ENCODE measurements at regions of chr7 and their contacts with region 1.

Region 1: GRCh38 chr7:138842111-138842510 is 44.1 kb upstream of the ATP6V0A4 start:
- DNase-seq: no peak
- H3K4me3 ChIP-seq: no peak overlapping the region
- H3K27ac ChIP-seq: no peak overlapping the region
- H3K4me1 ChIP-seq: peaks cover 10% of the 10 kb centered on the region
- H3K27me3 ChIP-seq: no peaks in the 10 kb centered on the region
- CTCF ChIP-seq: no peak
- POLR2A ChIP-seq: no peak

Region 2: GRCh38 chr7:138303943-138304495 is 538.1 kb before region 1 on chr7:
- CTCF ChIA-PET with region 1: no interaction called
- POLR2A ChIA-PET with region 1: no interaction called
- dilution Hi-C with region 1: no loop called
- intact Hi-C with region 1: no loop called
- DNase-seq: no peak
- H3K4me3 ChIP-seq: no peak overlapping the region
- H3K27ac ChIP-seq: no peak overlapping the region
- H3K4me1 ChIP-seq: no peaks in the 10 kb centered on the region
- H3K27me3 ChIP-seq: no peaks in the 10 kb centered on the region
- CTCF ChIP-seq: no peak
- POLR2A ChIP-seq: no peak

Region 3: DNA sequence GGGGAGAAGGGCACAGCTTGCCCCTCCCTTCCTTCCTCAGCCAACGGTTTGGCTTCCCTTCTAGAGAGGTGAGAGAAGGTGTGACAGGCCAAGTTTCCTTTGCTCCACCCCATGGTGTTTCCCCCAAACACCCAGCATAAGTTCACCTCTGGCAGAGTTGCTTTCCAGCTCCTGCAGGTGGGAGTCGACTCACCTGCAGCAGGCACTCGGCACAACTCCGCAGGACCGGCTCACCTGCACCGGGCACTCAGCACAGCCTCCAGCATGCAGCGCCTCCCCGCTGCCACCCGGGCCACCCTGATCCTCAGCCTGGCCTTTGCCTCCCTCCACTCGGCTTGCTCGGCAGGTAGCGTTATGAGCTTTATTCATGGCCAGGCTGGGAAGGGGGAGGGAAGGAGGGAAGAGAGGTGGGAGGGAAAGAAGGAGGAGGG is 44.3 kb before region 1 on chr7 and contains the starts of genes ATP6V0A4 and TMEM213:
- CTCF ChIA-PET with region 1: no interaction called
- POLR2A ChIA-PET with region 1: no interaction called
- dilution Hi-C with region 1: no loop called
- intact Hi-C with region 1: no loop called
- DNase-seq: no peak
- H3K4me3 ChIP-seq: no peak within 1 kb of the TSS
- H3K27ac ChIP-seq: no peak within 1 kb of the TSS
- H3K4me1 ChIP-seq: no peaks in the 10 kb centered on the region
- H3K27me3 ChIP-seq: no peaks in the 10 kb centered on the region
- CTCF ChIP-seq: no peak
- POLR2A ChIP-seq: no peak
- total RNA-seq, gene ATP6V0A4: 0.24 TPM in 1 of 2 replicates, not detected in the other
- total RNA-seq, gene TMEM213: not detected in 2 replicates

Region 4: DNA sequence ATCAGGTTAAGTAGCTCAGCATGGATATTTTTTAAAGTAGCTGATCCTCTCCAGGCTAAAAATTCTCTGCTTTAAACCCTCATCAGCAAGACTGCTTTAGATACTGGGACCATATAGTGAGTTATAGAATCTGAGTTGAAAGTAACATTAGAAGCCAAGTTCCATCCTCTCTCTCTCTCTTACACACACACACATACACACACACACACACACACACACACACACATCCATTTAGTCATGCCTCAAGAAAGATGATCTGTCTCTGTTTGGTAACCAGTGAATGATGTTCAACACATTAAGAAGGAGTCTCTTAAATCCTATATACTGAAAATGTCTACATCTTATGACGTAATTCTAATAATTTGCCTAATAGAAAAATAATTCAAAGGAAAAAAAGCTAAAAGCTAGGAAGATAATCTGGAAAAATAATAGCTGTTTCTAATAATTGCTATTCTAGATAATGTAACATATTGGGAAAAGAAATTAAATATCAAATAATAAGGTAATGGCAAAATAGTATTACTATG is 27.2 kb before region 1 on chr7:
- CTCF ChIA-PET with region 1: no interaction called
- POLR2A ChIA-PET with region 1: no interaction called
- dilution Hi-C with region 1: no loop called
- intact Hi-C with region 1: loop called (anchors 1 kb)
- DNase-seq: no peak
- H3K4me3 ChIP-seq: no peak overlapping the region
- H3K27ac ChIP-seq: no peak overlapping the region
- H3K4me1 ChIP-seq: no peaks in the 10 kb centered on the region
- H3K27me3 ChIP-seq: no peaks in the 10 kb centered on the region
- CTCF ChIP-seq: no peak
- POLR2A ChIP-seq: no peak

Region 5: GRCh38 chr7:139058943-139059342 is 216.8 kb after region 1 on chr7:
- CTCF ChIA-PET with region 1: no interaction called
- POLR2A ChIA-PET with region 1: no interaction called
- dilution Hi-C with region 1: no loop called
- intact Hi-C with region 1: no loop called
- DNase-seq: peak; percentile 81
- H3K4me3 ChIP-seq: no peak overlapping the region
- H3K27ac ChIP-seq: peak overlapping the region; percentile 67
- H3K4me1 ChIP-seq: peaks cover 23% of the 10 kb centered on the region
- H3K27me3 ChIP-seq: no peaks in the 10 kb centered on the region
- CTCF ChIP-seq: no peak
- POLR2A ChIP-seq: no peak

Measured in endothelial cell of umbilical vein (primary cell).